ENCODE measurements at regions of chr6 and their contacts with region 1.

Region 1: GRCh38 chr6:158104696-158105095 is 63.4 kb downstream of the SERAC1 start:
- DNase-seq: no peak
- ATAC-seq: no peak
- H3K4me3 ChIP-seq: no peak overlapping the region
- H3K27ac ChIP-seq: no peak overlapping the region
- H3K4me1 ChIP-seq: no peaks in the 10 kb centered on the region
- H3K27me3 ChIP-seq: no peaks in the 10 kb centered on the region
- CTCF ChIP-seq: no peak
- POLR2A ChIP-seq: no peak
- RAD21 ChIP-seq: no peak

Region 2: GRCh38 chr6:158118886-158119285 is 14.2 kb after region 1 on chr6:
- CTCF ChIA-PET with region 1: no interaction called
- POLR2A ChIA-PET with region 1: no interaction called
- dilution Hi-C with region 1: no loop called
- in situ Hi-C with region 1: no loop called
- intact Hi-C with region 1: loop called (anchors 2 kb)
- DNase-seq: no peak
- ATAC-seq: no peak
- H3K4me3 ChIP-seq: no peak overlapping the region
- H3K27ac ChIP-seq: no peak overlapping the region
- H3K4me1 ChIP-seq: no peaks in the 10 kb centered on the region
- H3K27me3 ChIP-seq: no peaks in the 10 kb centered on the region
- CTCF ChIP-seq: no peak
- POLR2A ChIP-seq: no peak
- RAD21 ChIP-seq: no peak

Region 3: GRCh38 chr6:158149641-158150040 is 44.9 kb after region 1 on chr6:
- CTCF ChIA-PET with region 1: no interaction called
- POLR2A ChIA-PET with region 1: no interaction called
- dilution Hi-C with region 1: no loop called
- in situ Hi-C with region 1: no loop called
- intact Hi-C with region 1: no loop called
- DNase-seq: peak; percentile 91
- ATAC-seq: peak; percentile 78
- H3K4me3 ChIP-seq: no peak overlapping the region
- H3K27ac ChIP-seq: no peak overlapping the region
- H3K4me1 ChIP-seq: peaks cover 4% of the 10 kb centered on the region
- H3K27me3 ChIP-seq: no peaks in the 10 kb centered on the region
- CTCF ChIP-seq: no peak
- POLR2A ChIP-seq: no peak
- RAD21 ChIP-seq: no peak

Region 4: GRCh38 chr6:158184608-158185007 is 79.9 kb after region 1 on chr6:
- CTCF ChIA-PET with region 1: no interaction called
- POLR2A ChIA-PET with region 1: no interaction called
- dilution Hi-C with region 1: no loop called
- in situ Hi-C with region 1: no loop called
- intact Hi-C with region 1: no loop called
- DNase-seq: peak; percentile 52
- ATAC-seq: no peak
- H3K4me3 ChIP-seq: no peak overlapping the region
- H3K27ac ChIP-seq: no peak overlapping the region
- H3K4me1 ChIP-seq: no peaks in the 10 kb centered on the region
- H3K27me3 ChIP-seq: no peaks in the 10 kb centered on the region
- CTCF ChIP-seq: no peak
- POLR2A ChIP-seq: no peak
- RAD21 ChIP-seq: no peak